ENCODE measurements at regions of chr13 and their contacts with region 1.

Region 1: DNA sequence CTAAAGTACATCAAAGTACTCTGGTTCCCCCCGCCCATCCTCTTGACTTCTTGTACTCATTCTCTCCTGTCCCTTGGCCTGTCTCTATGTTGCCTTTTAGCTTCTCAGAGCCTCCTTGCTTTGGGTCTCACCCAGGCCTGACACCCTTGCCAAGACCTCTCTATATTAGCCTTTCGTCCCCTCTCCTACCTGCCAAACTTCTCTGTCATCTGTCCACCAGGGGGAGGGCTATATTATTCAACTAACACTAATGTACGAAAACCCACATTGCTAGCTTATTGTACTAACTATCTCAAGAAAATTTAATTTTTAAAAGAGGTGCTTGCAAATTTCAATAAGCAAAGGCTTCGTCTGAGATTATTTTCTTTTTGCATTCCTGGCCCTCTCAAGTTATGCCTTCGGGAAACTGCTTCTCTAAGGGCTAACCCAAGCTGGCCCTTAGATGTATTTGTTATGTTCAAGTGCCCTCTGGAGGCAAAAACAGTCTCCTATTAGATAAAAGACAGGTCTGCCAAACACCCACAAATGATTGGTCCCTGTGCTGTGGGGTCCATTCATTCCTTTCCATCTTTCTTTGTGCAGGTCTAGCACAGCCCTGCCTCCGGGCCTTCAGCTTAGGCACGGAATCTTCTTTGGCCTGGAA is 6.3 kb upstream of the MRPS31 start:
- DNase-seq: peak; percentile 56
- CTCF ChIP-seq: peak; percentile 59

Region 2: GRCh38 chr13:40069173-40070044 is 707.9 kb before region 1 on chr13:
- CTCF ChIA-PET with region 1: interaction called, 12 read pairs
- POLR2A ChIA-PET with region 1: no interaction called
- DNase-seq: peak; percentile 59
- CTCF ChIP-seq: peak; percentile 77

Region 3: GRCh38 chr13:40764587-40765403 is 12.5 kb before region 1 on chr13:
- CTCF ChIA-PET with region 1: interaction called, 29 read pairs
- POLR2A ChIA-PET with region 1: no interaction called
- DNase-seq: no peak
- CTCF ChIP-seq: no peak

Region 4: GRCh38 chr13:40798380-40798779 is 21.1 kb after region 1 on chr13:
- CTCF ChIA-PET with region 1: interaction called, 11 read pairs
- POLR2A ChIA-PET with region 1: no interaction called
- DNase-seq: no peak
- CTCF ChIP-seq: no peak

Region 5: DNA sequence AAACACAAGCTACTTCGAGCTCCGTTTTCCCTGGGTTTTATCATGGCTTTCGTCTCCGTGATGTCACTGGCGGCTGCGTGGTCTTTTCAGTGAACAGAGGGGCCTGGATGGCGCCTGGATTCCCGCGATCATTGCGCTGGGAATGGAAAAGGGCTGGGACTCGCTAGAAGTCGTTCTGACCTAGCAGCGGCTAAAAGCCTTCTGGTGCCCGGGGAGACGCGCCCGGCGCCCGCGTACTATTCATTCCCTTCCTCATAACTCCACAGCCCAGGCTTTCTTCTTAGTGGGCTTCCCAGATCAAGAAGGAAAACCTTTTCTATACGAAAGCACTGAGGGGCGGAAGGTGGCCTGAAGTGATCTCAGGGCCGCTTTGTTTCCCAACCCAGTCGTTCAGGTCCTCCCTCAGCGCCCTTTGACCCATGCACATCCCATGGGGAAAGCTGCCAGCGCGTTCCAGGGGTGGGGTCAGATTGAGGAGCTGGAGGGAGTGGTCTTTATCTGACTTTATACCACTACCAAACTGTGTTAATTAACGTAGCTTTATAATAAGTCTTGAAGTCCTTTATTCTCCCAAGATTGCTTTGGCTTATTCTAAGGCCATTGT is 145.3 kb after region 1 on chr13:
- CTCF ChIA-PET with region 1: interaction called, 16 read pairs
- POLR2A ChIA-PET with region 1: no interaction called
- DNase-seq: no peak
- CTCF ChIP-seq: no peak

Region 6: DNA sequence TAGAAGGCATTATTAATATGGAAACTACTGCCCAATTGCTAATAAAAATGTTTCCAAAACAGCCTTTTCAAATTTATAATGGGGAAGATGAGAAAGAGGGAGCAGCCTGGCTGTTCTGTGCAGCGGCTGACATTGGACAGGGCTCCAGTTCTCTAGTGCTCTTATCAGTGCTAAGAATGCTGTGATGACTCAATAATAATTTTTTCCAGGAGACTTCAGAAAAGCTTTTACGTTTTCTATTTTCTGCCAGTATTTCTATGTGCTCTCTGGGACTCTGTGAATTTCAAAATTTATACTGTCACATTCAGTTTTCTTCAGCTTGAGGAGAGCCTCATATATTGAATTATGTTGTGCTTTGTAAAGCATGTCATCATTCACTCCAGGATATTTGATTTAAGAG is 974.0 kb after region 1 on chr13:
- CTCF ChIA-PET with region 1: no interaction called
- POLR2A ChIA-PET with region 1: no interaction called
- DNase-seq: no peak
- CTCF ChIP-seq: no peak